Lower leg skin (tissue), 4 donors: ENCODE measurements at regions of chr13 and their contacts with region 1.

Region 1: GRCh38 chr13:106488076-106488475 is 47.4 kb downstream of the EFNB2 start:
- DNase-seq: no peak
- H3K4me3 ChIP-seq: no peak overlapping the region
- CTCF ChIP-seq: no peak
- POLR2A ChIP-seq: no peak

Region 2: GRCh38 chr13:105914291-105915036 is 573.6 kb before region 1 on chr13:
- intact Hi-C with region 1: no loop called
- DNase-seq: no peak
- H3K4me3 ChIP-seq: no peak overlapping the region
- CTCF ChIP-seq: no peak
- POLR2A ChIP-seq: no peak

Region 3: GRCh38 chr13:106525863-106526262 is 37.8 kb after region 1 on chr13:
- intact Hi-C with region 1: loop called (anchors 1 kb)
- DNase-seq: no peak
- H3K4me3 ChIP-seq: no peak overlapping the region
- CTCF ChIP-seq: no peak
- POLR2A ChIP-seq: no peak